ENCODE measurements at regions of chr12 and their contacts with region 1.

Region 1: GRCh38 chr12:89552376-89552775 is 26.5 kb upstream of the POC1B start:
- DNase-seq: no peak

Region 2: GRCh38 chr12:90262251-90262650 is 709.9 kb after region 1 on chr12:
- intact Hi-C with region 1: loop called in 1 of 2 experiments (anchors 5 kb)
- DNase-seq: no peak